ENCODE measurements at regions of chr14 and their contacts with region 1.

Region 1: DNA sequence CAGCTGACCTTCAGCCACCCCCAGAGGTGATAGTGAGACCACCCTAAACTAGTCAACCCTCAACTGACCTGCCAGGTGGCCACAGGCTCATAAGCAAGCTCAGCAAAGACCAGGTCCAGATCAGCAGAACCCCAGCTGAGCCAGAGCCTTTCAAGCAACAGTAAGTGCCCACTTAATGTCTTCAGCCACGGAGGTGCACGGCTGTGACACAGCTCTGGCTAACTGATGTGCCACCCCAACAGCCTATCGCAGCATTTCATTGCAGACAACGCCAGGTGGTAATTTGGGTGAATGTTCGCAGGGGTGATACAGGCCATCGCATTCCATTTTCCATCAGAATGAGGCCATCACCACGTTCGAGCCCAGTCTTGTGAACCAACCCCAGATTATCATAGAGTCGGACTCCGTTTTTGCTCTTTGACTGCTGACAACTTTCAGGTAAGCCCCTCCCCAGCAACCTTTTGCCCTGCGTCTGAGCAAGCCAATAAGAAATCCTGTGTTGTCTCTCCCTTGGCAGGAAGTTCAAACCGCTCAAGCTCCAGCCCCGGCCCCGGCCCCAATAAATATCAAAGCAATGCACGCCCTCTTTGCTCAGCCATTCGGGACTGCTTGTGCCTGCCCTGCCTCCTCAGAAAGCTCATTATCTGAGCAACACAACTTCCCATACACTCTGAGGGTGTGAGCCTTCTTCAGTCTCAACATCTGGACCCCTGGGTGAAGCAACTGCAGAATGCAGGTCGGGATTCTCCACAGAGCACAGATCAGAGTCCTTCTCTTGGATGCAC is 44.4 kb downstream of the JAG2 start:
- DNase-seq: no peak
- H3K4me3 ChIP-seq: no peak overlapping the region
- H3K27ac ChIP-seq: no peak overlapping the region
- H3K4me1 ChIP-seq: peaks cover 12% of the 10 kb centered on the region
- H3K27me3 ChIP-seq: no peaks in the 10 kb centered on the region
- CTCF ChIP-seq: no peak

Region 2: GRCh38 chr14:105059035-105059924 is 64.9 kb before region 1 on chr14:
- CTCF ChIA-PET with region 1: no interaction called
- dilution Hi-C with region 1: loop called (anchors 5 kb)
- in situ Hi-C with region 1: no loop called
- intact Hi-C with region 1: no loop called
- DNase-seq: no peak
- H3K4me3 ChIP-seq: no peak overlapping the region
- H3K27ac ChIP-seq: no peak overlapping the region
- H3K4me1 ChIP-seq: no peaks in the 10 kb centered on the region
- H3K27me3 ChIP-seq: peaks cover 2% of the 10 kb centered on the region
- CTCF ChIP-seq: no peak

Region 3: GRCh38 chr14:105161964-105162668 is 37.9 kb after region 1 on chr14:
- CTCF ChIA-PET with region 1: no interaction called
- dilution Hi-C with region 1: loop called (anchors 5 kb)
- in situ Hi-C with region 1: no loop called
- intact Hi-C with region 1: no loop called
- DNase-seq: no peak
- H3K4me3 ChIP-seq: no peak overlapping the region
- H3K27ac ChIP-seq: no peak overlapping the region
- H3K4me1 ChIP-seq: peaks cover 39% of the 10 kb centered on the region
- H3K27me3 ChIP-seq: no peaks in the 10 kb centered on the region
- CTCF ChIP-seq: no peak

Region 4: DNA sequence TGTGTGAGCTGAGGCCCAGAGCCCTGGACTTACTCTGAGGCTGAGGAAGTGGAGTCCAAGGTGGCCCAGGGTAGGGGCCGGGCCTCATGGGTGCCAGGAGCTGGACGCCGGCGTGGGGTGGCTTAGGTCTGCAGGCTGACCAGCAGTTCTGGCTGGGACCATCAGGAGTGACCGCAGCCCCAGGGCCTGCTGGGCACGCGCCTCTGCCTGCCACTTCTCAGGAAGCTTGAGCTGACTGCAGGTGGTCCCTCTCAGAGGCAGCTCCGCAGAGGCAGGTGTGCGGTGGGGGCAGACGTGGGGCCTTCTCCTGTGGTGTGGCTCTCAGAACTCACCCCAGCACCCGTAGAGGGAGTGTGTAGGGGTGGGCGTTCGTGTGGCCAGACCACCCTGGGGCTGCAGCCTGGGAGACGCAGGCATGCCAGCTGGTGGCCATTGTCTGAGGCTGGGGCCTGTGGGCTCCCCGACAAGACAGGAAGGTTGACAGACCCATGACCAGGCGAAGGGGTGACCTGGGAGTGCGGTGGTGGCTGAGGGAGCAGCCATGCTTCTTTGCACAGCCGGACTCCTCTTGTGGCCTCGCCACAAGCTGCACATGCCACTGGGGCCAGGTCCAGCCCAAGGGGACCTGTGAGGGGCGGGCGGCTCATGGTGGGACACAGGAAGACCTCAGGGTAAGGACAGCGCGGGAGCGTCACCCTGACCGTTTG is 234.1 kb after region 1 on chr14:
- CTCF ChIA-PET with region 1: no interaction called
- dilution Hi-C with region 1: loop called (anchors 5 kb)
- in situ Hi-C with region 1: no loop called
- intact Hi-C with region 1: no loop called
- DNase-seq: no peak
- H3K4me3 ChIP-seq: no peak overlapping the region
- H3K27ac ChIP-seq: no peak overlapping the region
- H3K4me1 ChIP-seq: no peaks in the 10 kb centered on the region
- H3K27me3 ChIP-seq: no peaks in the 10 kb centered on the region
- CTCF ChIP-seq: no peak

Region 5: DNA sequence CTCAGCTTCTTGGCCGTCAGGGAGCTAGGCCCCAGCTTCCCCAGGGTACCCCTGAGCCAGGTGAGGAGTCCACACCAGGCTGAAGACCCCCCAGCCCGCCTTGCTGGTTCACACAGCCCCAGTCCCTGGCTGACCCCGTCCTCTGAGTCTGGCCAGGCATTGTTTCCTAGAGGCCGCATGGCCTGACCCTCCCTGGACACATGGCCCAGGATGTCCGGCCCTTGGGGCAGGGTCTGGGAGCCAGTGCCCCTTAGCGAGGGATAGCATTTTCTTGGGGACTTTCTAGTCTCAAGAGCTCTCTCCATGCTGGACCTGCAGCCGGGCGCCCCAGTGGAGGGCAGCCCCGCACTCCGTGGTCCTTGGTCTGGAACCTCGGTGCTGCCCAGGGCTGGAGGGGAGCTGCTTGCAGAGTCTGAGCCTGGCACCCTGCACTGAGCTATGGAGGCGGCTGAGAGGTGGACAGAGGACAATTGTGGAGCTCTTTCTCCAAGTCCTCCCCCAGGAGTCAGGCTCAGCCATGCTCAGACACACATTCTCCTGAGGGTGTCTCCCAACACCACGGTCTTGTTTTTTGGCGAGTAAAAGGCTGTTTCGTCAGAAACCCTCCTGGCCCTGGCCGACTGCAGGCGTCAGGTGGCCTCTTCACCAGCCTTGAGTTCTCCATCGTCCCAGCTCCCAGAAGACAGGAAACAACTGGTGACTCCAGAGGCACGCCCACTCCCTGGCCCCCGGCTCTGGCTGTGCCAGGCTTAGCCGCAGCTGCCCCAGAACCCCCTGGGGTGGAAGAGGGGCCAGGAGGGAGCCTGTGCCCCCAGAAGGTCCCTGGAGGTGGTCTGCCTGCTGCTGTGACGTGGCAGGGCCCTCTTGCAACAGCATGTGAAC is 332.8 kb after region 1 on chr14:
- CTCF ChIA-PET with region 1: no interaction called
- dilution Hi-C with region 1: loop called (anchors 10 kb)
- in situ Hi-C with region 1: no loop called
- intact Hi-C with region 1: no loop called
- DNase-seq: no peak
- H3K4me3 ChIP-seq: no peak overlapping the region
- H3K27ac ChIP-seq: no peak overlapping the region
- H3K4me1 ChIP-seq: no peaks in the 10 kb centered on the region
- H3K27me3 ChIP-seq: no peaks in the 10 kb centered on the region
- CTCF ChIP-seq: no peak

Measured in mammary epithelial cell (primary cell).